ENCODE measurements at regions of chr14 and their contacts with region 1.

Region 1: DNA sequence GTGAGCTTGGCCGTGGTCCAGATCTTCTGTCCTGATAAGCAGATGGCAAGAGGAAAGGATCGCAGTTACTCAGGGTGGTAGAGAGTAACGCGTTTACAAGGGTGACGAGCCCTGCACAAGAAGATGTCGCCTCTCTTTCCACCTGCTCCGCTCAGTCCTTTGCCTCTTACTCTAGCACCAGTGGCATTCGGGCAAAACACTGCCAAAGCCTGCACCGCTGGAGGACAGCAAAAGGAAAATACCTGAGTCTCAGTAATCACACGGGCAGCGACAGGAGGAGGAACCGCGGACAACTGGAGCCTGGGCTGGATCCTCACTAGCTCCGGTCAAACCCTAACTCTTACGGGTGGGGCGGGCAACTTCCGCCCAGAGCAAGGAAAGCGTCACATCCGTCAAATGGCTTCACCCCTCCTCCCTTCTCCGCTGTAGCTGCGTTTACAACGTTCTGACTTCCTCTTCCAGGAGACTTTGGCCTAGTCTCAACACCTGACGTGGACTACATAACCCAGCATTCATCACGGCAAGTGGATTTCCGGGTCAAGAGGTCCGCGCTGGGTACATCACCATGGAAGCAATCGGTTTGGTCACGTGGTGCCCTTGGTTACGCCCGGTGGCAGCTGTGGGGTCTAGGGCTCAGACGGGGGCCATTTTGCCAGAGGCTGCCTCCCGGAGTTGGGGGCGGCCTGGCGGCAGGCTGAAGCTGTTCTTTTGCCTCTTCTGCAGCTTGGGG is at the starts of genes KLHL28 and TOGARAM1:
- DNase-seq: peak; percentile 79 to 100 (median 96)
- ATAC-seq: peak; percentile 95
- H3K4me3 ChIP-seq: peak within 1 kb of the TSS; percentile 99
- H3K4me3 Mint-ChIP-seq: no peak within 1 kb of the TSS
- H3K27ac ChIP-seq: peak within 1 kb of the TSS; percentile 91
- H3K27ac Mint-ChIP-seq: peak within 1 kb of the TSS in 1 of 9 donors; percentile 40
- H3K4me1 ChIP-seq: peaks cover 32 to 50% of the 10 kb centered on the region in 2 donors
- H3K4me1 Mint-ChIP-seq: peaks cover 33 to 68% (median 54%) of the 10 kb centered on the region in 7 donors
- H3K27me3 ChIP-seq: no peaks in the 10 kb centered on the region
- H3K27me3 Mint-ChIP-seq: no peaks in the 10 kb centered on the region
- total RNA-seq, gene KLHL28: 22.1 to 50.2 (median 41.4) TPM
- total RNA-seq, gene TOGARAM1: 11.0 to 17.5 (median 15.0) TPM

Region 2: GRCh38 chr14:44897045-44897844 is 64.5 kb before region 1 on chr14:
- CTCF ChIA-PET with region 1: interaction called, 3 read pairs
- POLR2A ChIA-PET with region 1: interaction called, 59 read pairs
- intact Hi-C with region 1: loop called (anchors 1 kb)
- DNase-seq: peak; percentile 80 to 98 (median 90)
- ATAC-seq: peak; percentile 99
- H3K4me3 ChIP-seq: peak overlapping the region; percentile 68
- H3K4me3 Mint-ChIP-seq: peak overlapping the region; percentile 80 to 97 (median 94)
- H3K27ac ChIP-seq: peak overlapping the region; percentile 86
- H3K27ac Mint-ChIP-seq: peak overlapping the region; percentile 83 to 98 (median 98)
- H3K4me1 ChIP-seq: peaks cover 13 to 17% of the 10 kb centered on the region in 2 donors
- H3K4me1 Mint-ChIP-seq: peaks cover 6 to 40% (median 27%) of the 10 kb centered on the region in 7 donors
- H3K27me3 ChIP-seq: no peaks in the 10 kb centered on the region
- H3K27me3 Mint-ChIP-seq: no peaks in the 10 kb centered on the region

Region 3: GRCh38 chr14:44928793-44929192 is 33.0 kb before region 1 on chr14:
- CTCF ChIA-PET with region 1: no interaction called
- POLR2A ChIA-PET with region 1: no interaction called
- intact Hi-C with region 1: loop called in 1 of 2 experiments (anchors 1 kb)
- DNase-seq: no peak
- ATAC-seq: no peak
- H3K4me3 ChIP-seq: no peak overlapping the region
- H3K4me3 Mint-ChIP-seq: no peak overlapping the region
- H3K27ac ChIP-seq: no peak overlapping the region
- H3K27ac Mint-ChIP-seq: peak overlapping the region in 1 of 9 donors; percentile 53
- H3K4me1 ChIP-seq: no peaks in the 10 kb centered on the region
- H3K4me1 Mint-ChIP-seq: peaks cover 2 to 30% (median 21%) of the 10 kb centered on the region in 7 donors
- H3K27me3 ChIP-seq: no peaks in the 10 kb centered on the region
- H3K27me3 Mint-ChIP-seq: no peaks in the 10 kb centered on the region

Region 4: DNA sequence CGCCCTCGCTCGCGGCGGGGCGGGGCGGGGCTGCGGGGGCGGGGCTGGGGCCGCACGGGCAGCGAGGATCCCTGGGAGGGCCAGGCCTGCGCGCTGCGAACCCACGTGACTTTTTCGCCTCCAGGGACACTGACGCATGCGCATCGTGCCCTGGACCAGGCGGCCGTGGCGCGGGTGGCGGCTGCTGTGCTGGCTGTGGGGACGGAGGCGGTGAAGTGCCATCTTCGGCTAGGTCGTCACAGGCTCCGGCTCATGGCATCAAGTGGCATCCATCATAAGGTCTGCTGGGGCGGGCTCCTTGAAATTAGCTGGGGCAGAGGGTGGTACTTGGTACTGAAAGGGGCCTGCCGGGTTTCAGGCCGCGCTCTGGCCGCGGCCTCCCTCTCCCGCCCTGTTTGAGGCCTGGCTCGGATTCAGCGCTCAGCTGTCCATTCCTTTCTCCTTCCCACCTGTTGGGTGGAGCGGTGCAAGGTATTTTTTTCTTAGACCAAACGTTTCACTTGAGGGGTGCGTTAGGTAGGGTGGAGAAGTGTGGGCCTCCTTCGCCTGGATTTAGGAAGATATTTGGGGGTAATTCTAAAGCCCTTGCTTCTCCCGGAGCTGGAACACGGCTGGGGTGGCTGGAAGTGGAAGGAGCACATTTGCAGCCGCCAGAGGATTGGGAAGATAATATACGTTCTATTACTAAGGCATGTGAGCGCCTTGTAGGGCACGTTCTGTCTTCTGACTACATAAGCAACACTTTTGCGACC is 122.4 kb after region 1 on chr14 and contains the start of gene PRPF39:
- CTCF ChIA-PET with region 1: no interaction called
- POLR2A ChIA-PET with region 1: interaction called, 6 read pairs
- intact Hi-C with region 1: loop called (anchors 1 kb)
- DNase-seq: peak; percentile 89 to 97 (median 92)
- ATAC-seq: peak; percentile 97
- H3K4me3 ChIP-seq: peak within 1 kb of the TSS; percentile 86
- H3K4me3 Mint-ChIP-seq: peak within 1 kb of the TSS; percentile 94 to 97 (median 96)
- H3K27ac ChIP-seq: peak within 1 kb of the TSS; percentile 84
- H3K27ac Mint-ChIP-seq: peak within 1 kb of the TSS; percentile 89 to 98 (median 93)
- H3K4me1 ChIP-seq: peaks cover 21 to 40% of the 10 kb centered on the region in 2 donors
- H3K4me1 Mint-ChIP-seq: peaks cover 35 to 63% (median 50%) of the 10 kb centered on the region in 7 donors
- H3K27me3 ChIP-seq: no peaks in the 10 kb centered on the region
- H3K27me3 Mint-ChIP-seq: no peaks in the 10 kb centered on the region
- total RNA-seq, gene PRPF39: 46.2 to 81.8 (median 58.4) TPM

Region 5: GRCh38 chr14:45123271-45123670 is 161.5 kb after region 1 on chr14:
- CTCF ChIA-PET with region 1: no interaction called
- POLR2A ChIA-PET with region 1: no interaction called
- intact Hi-C with region 1: no loop called
- DNase-seq: no peak
- ATAC-seq: no peak
- H3K4me3 ChIP-seq: no peak overlapping the region
- H3K4me3 Mint-ChIP-seq: no peak overlapping the region
- H3K27ac ChIP-seq: no peak overlapping the region
- H3K27ac Mint-ChIP-seq: no peak overlapping the region
- H3K4me1 ChIP-seq: no peaks in the 10 kb centered on the region
- H3K4me1 Mint-ChIP-seq: peaks cover 1 to 12% (median 8%) of the 10 kb centered on the region in 7 donors
- H3K27me3 ChIP-seq: no peaks in the 10 kb centered on the region
- H3K27me3 Mint-ChIP-seq: no peaks in the 10 kb centered on the region

Region 6: GRCh38 chr14:45253068-45253753 is 291.4 kb after region 1 on chr14 and contains the start of gene MIS18BP1:
- CTCF ChIA-PET with region 1: no interaction called
- POLR2A ChIA-PET with region 1: interaction called, 8 read pairs
- intact Hi-C with region 1: loop called (anchors 1 kb)
- DNase-seq: peak; percentile 83 to 95 (median 91)
- ATAC-seq: peak; percentile 94
- H3K4me3 ChIP-seq: peak within 1 kb of the TSS; percentile 78
- H3K4me3 Mint-ChIP-seq: peak within 1 kb of the TSS; percentile 89 to 97 (median 95)
- H3K27ac ChIP-seq: peak within 1 kb of the TSS; percentile 75
- H3K27ac Mint-ChIP-seq: peak within 1 kb of the TSS; percentile 92 to 97 (median 95)
- H3K4me1 ChIP-seq: peaks cover 0 to 13% of the 10 kb centered on the region in 2 donors
- H3K4me1 Mint-ChIP-seq: peaks cover 5 to 31% (median 20%) of the 10 kb centered on the region in 7 donors
- H3K27me3 ChIP-seq: no peaks in the 10 kb centered on the region
- H3K27me3 Mint-ChIP-seq: peaks cover 0 to 6% (median 0%) of the 10 kb centered on the region in 5 donors
- total RNA-seq, gene MIS18BP1: 15.6 to 64.9 (median 29.4) TPM